Sigmoid colon (tissue), 7 donors: ENCODE measurements at regions of chr10 and their contacts with region 1.

Region 1: GRCh38 chr10:11546581-11546980 is 64.9 kb downstream of the USP6NL start:
- DNase-seq: no peak
- H3K4me3 ChIP-seq: no peak overlapping the region
- H3K27ac ChIP-seq: no peak overlapping the region
- H3K4me1 ChIP-seq: peaks cover 0 to 7% (median 5%) of the 10 kb centered on the region in 4 donors
- H3K27me3 ChIP-seq: no peaks in the 10 kb centered on the region
- CTCF ChIP-seq: no peak
- EP300 ChIP-seq: no peak
- POLR2A ChIP-seq: no peak

Region 2: DNA sequence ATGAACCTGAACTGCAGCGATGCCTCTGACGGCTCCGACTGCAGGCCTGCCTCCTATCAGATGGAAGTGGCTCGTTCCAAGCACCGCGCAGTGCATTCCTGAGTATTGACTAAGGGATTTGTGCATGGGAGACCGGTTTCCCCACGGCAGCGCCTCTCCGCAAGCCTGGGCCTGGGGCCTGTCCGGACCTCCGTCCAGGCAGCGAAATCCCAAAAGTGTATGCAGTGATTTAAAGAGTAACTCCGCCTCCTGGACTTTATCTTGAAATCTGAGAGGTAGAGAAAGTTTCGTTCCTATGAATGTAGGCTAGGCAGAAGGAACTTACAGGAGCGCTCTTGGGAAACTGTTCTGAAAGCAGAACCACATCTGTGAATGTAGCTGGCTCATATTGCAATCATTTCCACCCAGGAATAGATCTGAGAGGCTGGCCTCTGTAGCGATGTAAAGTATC is 635.1 kb before region 1 on chr10:
- intact Hi-C with region 1: no loop called
- DNase-seq: peak; percentile 93
- H3K4me3 ChIP-seq: peak overlapping the region; percentile 25 to 42 (median 36)
- H3K27ac ChIP-seq: peak overlapping the region; percentile 73 to 86 (median 84)
- H3K4me1 ChIP-seq: peaks cover 0 to 46% (median 32%) of the 10 kb centered on the region in 4 donors
- H3K27me3 ChIP-seq: no peaks in the 10 kb centered on the region
- CTCF ChIP-seq: no peak
- EP300 ChIP-seq: no peak
- POLR2A ChIP-seq: no peak

Region 3: DNA sequence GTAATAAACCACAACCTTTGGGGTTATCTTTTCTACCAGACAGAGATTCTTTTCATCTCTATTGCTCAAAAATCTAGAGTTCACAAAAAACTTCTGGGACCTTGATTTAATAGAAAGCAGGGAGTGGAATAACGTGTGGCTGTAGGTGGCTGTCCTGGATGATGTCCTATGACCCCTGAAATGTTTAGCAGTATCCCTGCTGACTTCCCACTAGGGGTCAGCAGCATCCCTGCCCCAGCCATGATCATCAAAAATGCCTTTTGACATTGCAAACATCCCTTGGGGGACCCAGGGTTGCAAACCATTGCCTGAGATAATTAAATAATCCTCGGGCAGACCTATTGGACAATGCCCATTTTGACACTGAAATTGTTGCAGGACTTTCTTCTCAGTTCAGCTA is 112.3 kb before region 1 on chr10:
- intact Hi-C with region 1: no loop called
- DNase-seq: no peak
- H3K4me3 ChIP-seq: no peak overlapping the region
- H3K27ac ChIP-seq: no peak overlapping the region
- H3K4me1 ChIP-seq: peaks cover 0 to 13% (median 10%) of the 10 kb centered on the region in 4 donors
- H3K27me3 ChIP-seq: no peaks in the 10 kb centered on the region
- CTCF ChIP-seq: no peak
- EP300 ChIP-seq: no peak
- POLR2A ChIP-seq: no peak

Region 4: DNA sequence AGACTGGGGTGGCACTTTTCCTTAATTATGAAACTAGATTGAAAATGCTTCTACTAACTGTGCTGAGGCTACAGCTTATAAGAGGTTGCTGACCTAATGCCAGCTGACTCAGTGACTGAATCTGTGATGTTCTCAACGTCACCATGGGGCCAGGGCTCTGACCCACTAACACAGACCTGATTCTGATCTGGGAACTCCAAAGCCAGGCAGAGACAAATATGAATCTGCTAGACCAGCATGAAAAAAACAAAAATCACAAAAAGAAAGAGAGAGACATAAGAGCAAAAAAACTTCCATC is 48.8 kb after region 1 on chr10:
- intact Hi-C with region 1: loop called (anchors 5 kb)
- DNase-seq: no peak
- H3K4me3 ChIP-seq: no peak overlapping the region
- H3K27ac ChIP-seq: no peak overlapping the region
- H3K4me1 ChIP-seq: peaks cover 0 to 5% (median 0%) of the 10 kb centered on the region in 4 donors
- H3K27me3 ChIP-seq: no peaks in the 10 kb centered on the region
- CTCF ChIP-seq: no peak
- EP300 ChIP-seq: no peak
- POLR2A ChIP-seq: no peak